Naive thymus-derived CD4-positive, alpha-beta T cell (primary cell): ENCODE measurements at regions of chr9 and their contacts with region 1.

Region 1: DNA sequence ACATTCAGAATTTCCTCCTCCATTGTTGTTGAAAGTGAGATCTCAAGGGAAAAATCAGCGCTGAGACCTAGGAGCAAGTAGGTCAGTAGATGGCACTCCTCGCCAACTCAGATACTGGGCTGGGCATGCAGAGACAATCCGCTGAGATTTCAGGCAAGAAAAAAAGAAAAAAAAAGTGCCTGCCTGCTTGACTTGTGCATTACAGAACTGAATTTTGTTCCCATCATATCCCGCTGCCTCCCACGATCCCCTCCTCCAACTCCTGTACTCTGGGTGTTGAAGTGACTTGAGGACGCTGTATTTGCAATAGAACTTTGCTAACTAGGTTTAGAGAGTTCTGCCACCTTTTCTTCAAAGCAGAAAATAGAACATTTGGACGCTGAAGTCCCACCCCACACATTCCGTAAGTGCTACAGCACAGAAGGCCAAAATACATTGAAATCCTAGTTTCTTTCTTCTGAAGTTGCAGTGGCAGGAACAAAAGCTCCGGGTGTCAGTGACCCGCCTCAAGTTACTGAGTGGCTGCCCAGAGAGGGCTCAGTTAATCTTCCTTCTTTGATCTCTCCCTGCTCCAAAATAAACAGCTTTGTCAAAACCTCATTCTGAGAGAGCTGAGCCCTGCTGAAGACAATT is 265.8 kb downstream of the MLLT3 start:
- DNase-seq: peak; percentile 8 to 78 (median 66)
- ATAC-seq: peak; percentile 82
- H3K4me3 ChIP-seq: no peak overlapping the region
- H3K4me3 Mint-ChIP-seq: peak overlapping the region in 7 of 10 donors; percentile 12 to 76 (median 55)
- H3K27ac ChIP-seq: no peak overlapping the region
- H3K27ac Mint-ChIP-seq: peak overlapping the region; percentile 5 to 94 (median 79)
- H3K4me1 ChIP-seq: peaks cover 0 to 29% of the 10 kb centered on the region in 2 donors
- H3K4me1 Mint-ChIP-seq: peaks cover 24 to 83% (median 55%) of the 10 kb centered on the region in 7 donors
- H3K27me3 ChIP-seq: no peaks in the 10 kb centered on the region
- H3K27me3 Mint-ChIP-seq: no peaks in the 10 kb centered on the region

Region 2: DNA sequence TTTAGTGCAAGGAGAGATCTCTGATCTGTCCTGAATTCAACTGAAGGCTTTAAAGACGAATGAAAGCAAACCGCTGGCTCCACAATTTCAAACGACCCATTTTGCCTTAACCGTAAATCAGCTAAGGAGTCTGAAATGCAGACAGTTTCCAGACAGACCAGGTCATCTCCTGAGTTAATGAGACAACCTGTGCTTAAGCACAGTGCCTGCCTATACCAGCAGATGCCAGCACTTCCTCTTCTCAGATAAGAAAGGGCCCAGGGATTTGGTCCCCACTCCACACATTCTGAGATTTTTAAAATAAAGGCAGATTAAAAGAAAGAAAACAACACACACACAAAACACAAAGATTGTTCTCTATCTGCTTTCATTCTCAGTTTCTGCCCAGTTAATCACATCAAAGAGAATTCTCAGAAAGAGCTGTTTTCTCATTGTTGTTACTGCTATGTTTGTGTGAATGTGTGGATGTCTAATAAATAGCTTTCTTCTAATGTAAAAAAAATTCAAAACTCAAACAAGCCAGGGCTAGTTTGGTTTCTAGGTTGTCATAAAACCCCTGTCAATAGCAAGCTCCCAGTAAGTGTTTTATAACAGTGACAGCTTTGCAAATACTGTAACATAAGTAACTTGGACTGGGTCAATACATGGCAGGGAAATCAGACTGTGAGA is 409.9 kb before region 1 on chr9:
- CTCF ChIA-PET with region 1: interaction called, 11 read pairs
- POLR2A ChIA-PET with region 1: no interaction called
- intact Hi-C with region 1: no loop called
- DNase-seq: peak in 3 of 9 donors; percentile 5 to 35 (median 22)
- ATAC-seq: peak; percentile 57
- H3K4me3 ChIP-seq: no peak overlapping the region
- H3K4me3 Mint-ChIP-seq: no peak overlapping the region
- H3K27ac ChIP-seq: no peak overlapping the region
- H3K27ac Mint-ChIP-seq: peak overlapping the region in 4 of 9 donors; percentile 10 to 64 (median 34)
- H3K4me1 ChIP-seq: no peaks in the 10 kb centered on the region
- H3K4me1 Mint-ChIP-seq: peaks cover 2 to 24% (median 11%) of the 10 kb centered on the region in 7 donors
- H3K27me3 ChIP-seq: no peaks in the 10 kb centered on the region
- H3K27me3 Mint-ChIP-seq: peaks cover 0 to 14% (median 7%) of the 10 kb centered on the region in 5 donors

Region 3: DNA sequence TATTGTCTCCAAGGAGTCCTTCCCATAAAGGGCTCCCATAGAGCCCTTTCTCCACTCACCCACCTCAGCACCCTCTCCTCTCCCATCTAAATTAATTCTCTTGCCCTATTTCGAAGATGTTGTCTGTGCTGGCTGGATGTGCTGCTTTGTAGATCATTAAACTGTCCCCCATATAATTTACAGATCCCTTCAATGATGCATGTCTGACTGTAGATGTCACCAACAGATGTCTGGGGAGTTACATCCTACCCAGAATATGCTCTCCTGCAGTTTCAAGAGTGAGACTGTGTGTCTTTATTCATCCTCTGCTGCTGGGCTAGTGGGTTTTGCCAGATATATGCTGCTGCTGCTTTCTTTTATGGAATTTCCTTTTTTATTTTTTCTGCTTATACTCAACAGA is 85.4 kb before region 1 on chr9:
- CTCF ChIA-PET with region 1: interaction called, 7 read pairs
- POLR2A ChIA-PET with region 1: no interaction called
- intact Hi-C with region 1: loop called in 1 of 2 experiments (anchors 1 kb)
- DNase-seq: peak in 5 of 9 donors; percentile 9 to 34 (median 25)
- ATAC-seq: no peak
- H3K4me3 ChIP-seq: no peak overlapping the region
- H3K4me3 Mint-ChIP-seq: no peak overlapping the region
- H3K27ac ChIP-seq: no peak overlapping the region
- H3K27ac Mint-ChIP-seq: peak overlapping the region in 5 of 9 donors; percentile 0 to 42 (median 12)
- H3K4me1 ChIP-seq: no peaks in the 10 kb centered on the region
- H3K4me1 Mint-ChIP-seq: peaks cover 7 to 35% (median 12%) of the 10 kb centered on the region in 7 donors
- H3K27me3 ChIP-seq: no peaks in the 10 kb centered on the region
- H3K27me3 Mint-ChIP-seq: no peaks in the 10 kb centered on the region

Region 4: GRCh38 chr9:20426019-20426418 is 69.5 kb after region 1 on chr9:
- CTCF ChIA-PET with region 1: interaction called, 10 read pairs
- POLR2A ChIA-PET with region 1: no interaction called
- intact Hi-C with region 1: no loop called
- DNase-seq: no peak
- ATAC-seq: no peak
- H3K4me3 ChIP-seq: no peak overlapping the region
- H3K4me3 Mint-ChIP-seq: no peak overlapping the region
- H3K27ac ChIP-seq: no peak overlapping the region
- H3K27ac Mint-ChIP-seq: peak overlapping the region in 1 of 9 donors; percentile 21
- H3K4me1 ChIP-seq: peaks cover 3 to 4% of the 10 kb centered on the region in 2 donors
- H3K4me1 Mint-ChIP-seq: peaks cover 17 to 75% (median 62%) of the 10 kb centered on the region in 7 donors
- H3K27me3 ChIP-seq: no peaks in the 10 kb centered on the region
- H3K27me3 Mint-ChIP-seq: no peaks in the 10 kb centered on the region

Region 5: GRCh38 chr9:20701060-20701459 is 344.5 kb after region 1 on chr9:
- CTCF ChIA-PET with region 1: no interaction called
- POLR2A ChIA-PET with region 1: no interaction called
- intact Hi-C with region 1: loop called in 1 of 2 experiments (anchors 5 kb)
- DNase-seq: no peak
- ATAC-seq: no peak
- H3K4me3 ChIP-seq: no peak overlapping the region
- H3K4me3 Mint-ChIP-seq: no peak overlapping the region
- H3K27ac ChIP-seq: no peak overlapping the region
- H3K27ac Mint-ChIP-seq: peak overlapping the region in 1 of 9 donors; percentile 7
- H3K4me1 ChIP-seq: peaks cover 0 to 4% of the 10 kb centered on the region in 2 donors
- H3K4me1 Mint-ChIP-seq: peaks cover 5 to 26% (median 13%) of the 10 kb centered on the region in 7 donors
- H3K27me3 ChIP-seq: no peaks in the 10 kb centered on the region
- H3K27me3 Mint-ChIP-seq: no peaks in the 10 kb centered on the region

Region 6: DNA sequence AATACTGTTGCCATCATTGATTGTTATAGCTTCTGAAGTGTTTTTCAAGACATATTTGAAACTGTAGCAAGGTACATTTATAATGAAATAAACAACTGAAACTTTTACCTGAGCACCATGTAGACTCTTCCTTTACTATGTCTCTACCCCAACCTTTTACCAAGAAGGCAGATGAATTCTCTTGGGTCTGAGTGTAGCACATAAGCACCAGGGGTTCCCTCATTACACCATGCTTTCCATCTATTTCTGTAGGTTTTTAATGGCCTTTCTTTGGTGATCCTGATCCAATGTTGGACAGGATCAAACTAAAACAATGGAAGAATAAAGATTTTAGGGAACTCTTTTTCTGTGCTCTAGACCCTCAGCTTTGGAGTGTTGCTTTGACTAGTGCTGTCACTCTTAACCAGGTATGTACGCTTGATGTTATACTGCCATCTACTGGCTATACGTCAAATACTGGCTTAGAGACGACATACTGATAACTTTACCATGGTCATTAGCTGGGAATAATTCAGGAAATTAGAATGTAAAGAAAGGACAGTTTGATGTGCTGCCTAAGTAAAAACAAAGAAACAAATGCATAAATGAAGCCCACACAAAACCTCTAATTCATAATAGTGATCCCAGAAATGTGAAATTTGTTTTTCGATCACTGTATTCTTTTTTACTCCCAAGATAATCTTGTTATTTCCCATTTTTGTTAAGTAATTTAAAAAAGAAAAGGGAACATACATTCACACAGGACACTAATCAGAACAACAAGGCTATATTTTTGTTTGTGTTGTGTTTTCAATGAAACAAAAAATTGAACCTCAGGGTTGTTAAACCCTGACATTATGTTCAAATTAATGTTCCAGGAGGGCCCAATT is 754.4 kb after region 1 on chr9:
- CTCF ChIA-PET with region 1: interaction called, 7 read pairs
- POLR2A ChIA-PET with region 1: no interaction called
- intact Hi-C with region 1: loop called (anchors 1 to 5 kb)
- DNase-seq: peak in 7 of 9 donors; percentile 43 to 72 (median 62)
- ATAC-seq: peak; percentile 92
- H3K4me3 ChIP-seq: no peak overlapping the region
- H3K4me3 Mint-ChIP-seq: no peak overlapping the region
- H3K27ac ChIP-seq: no peak overlapping the region
- H3K27ac Mint-ChIP-seq: peak overlapping the region in 1 of 9 donors; percentile 51
- H3K4me1 ChIP-seq: no peaks in the 10 kb centered on the region
- H3K4me1 Mint-ChIP-seq: peaks cover 0 to 3% (median 0%) of the 10 kb centered on the region in 7 donors
- H3K27me3 ChIP-seq: no peaks in the 10 kb centered on the region
- H3K27me3 Mint-ChIP-seq: peaks cover 0 to 19% (median 0%) of the 10 kb centered on the region in 5 donors